Adrenal gland (tissue), 19 donors: ENCODE measurements at regions of chr12 and their contacts with region 1.

Region 1: GRCh38 chr12:69470189-69471075 is at the start of gene FRS2:
- DNase-seq: peak; percentile 90 to 95 (median 94)
- H3K4me3 ChIP-seq: peak within 1 kb of the TSS; percentile 67 to 96 (median 89)
- H3K27ac ChIP-seq: peak within 1 kb of the TSS; percentile 78 to 97 (median 92)
- H3K4me1 ChIP-seq: peaks cover 30 to 49% of the 10 kb centered on the region in 2 donors
- H3K27me3 ChIP-seq: no peaks in the 10 kb centered on the region
- CTCF ChIP-seq: peak in 5 of 6 experiments; percentile 34 to 54 (median 44)
- POLR2A ChIP-seq: peak; percentile 76 to 84
- total RNA-seq, gene FRS2: 36.2 to 86.1 (median 47.2) TPM

Region 2: GRCh38 chr12:69275471-69275891 is 195.0 kb before region 1 on chr12:
- intact Hi-C with region 1: no loop called
- DNase-seq: peak in 3 of 7 donors; percentile 15 to 32 (median 23)
- H3K4me3 ChIP-seq: no peak overlapping the region
- H3K27ac ChIP-seq: no peak overlapping the region
- H3K4me1 ChIP-seq: peaks cover 11 to 13% of the 10 kb centered on the region in 2 donors
- H3K27me3 ChIP-seq: no peaks in the 10 kb centered on the region
- CTCF ChIP-seq: no peak
- POLR2A ChIP-seq: no peak

Region 3: GRCh38 chr12:69415471-69416275 is 54.8 kb before region 1 on chr12:
- intact Hi-C with region 1: no loop called
- DNase-seq: peak; percentile 38 to 89 (median 63)
- H3K4me3 ChIP-seq: no peak overlapping the region
- H3K27ac ChIP-seq: peak overlapping the region in 1 of 5 donors; percentile 55
- H3K4me1 ChIP-seq: peaks cover 0 to 4% of the 10 kb centered on the region in 2 donors
- H3K27me3 ChIP-seq: no peaks in the 10 kb centered on the region
- CTCF ChIP-seq: peak; percentile 47 to 92 (median 84)
- POLR2A ChIP-seq: no peak

Region 4: GRCh38 chr12:69534389-69534822 is 64.0 kb after region 1 on chr12:
- intact Hi-C with region 1: loop called in 1 of 2 experiments (anchors 5 kb)
- DNase-seq: peak; percentile 31 to 82 (median 67)
- H3K4me3 ChIP-seq: no peak overlapping the region
- H3K27ac ChIP-seq: peak overlapping the region in 2 of 5 donors; percentile 66 to 73
- H3K4me1 ChIP-seq: peaks cover 7 to 12% of the 10 kb centered on the region in 2 donors
- H3K27me3 ChIP-seq: no peaks in the 10 kb centered on the region
- CTCF ChIP-seq: no peak
- POLR2A ChIP-seq: no peak

Region 5: DNA sequence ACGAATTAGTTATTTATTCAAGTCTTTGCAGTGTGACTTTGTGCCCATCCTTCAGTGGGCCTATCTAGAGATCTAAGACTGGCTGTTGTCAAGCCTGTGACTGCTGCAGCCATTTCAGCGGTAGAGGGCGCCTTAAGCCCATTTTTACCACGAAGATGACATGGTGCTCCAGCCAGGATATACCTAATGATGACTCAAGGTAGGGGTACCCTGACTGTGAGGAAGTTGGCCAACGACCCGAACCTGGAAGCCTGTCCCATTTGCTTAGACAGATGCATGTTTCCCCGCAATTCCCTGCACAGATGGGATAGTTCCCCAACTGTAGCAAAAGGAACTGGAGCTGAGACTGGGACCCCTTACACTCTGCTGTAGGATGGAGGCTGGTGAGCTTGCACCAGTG is 309.5 kb after region 1 on chr12:
- intact Hi-C with region 1: no loop called
- DNase-seq: peak in 4 of 7 donors; percentile 16 to 37 (median 28)
- H3K4me3 ChIP-seq: no peak overlapping the region
- H3K27ac ChIP-seq: no peak overlapping the region
- H3K4me1 ChIP-seq: no peaks in the 10 kb centered on the region
- H3K27me3 ChIP-seq: no peaks in the 10 kb centered on the region
- CTCF ChIP-seq: peak in 2 of 6 experiments; percentile 20 to 30
- POLR2A ChIP-seq: no peak

Region 6: DNA sequence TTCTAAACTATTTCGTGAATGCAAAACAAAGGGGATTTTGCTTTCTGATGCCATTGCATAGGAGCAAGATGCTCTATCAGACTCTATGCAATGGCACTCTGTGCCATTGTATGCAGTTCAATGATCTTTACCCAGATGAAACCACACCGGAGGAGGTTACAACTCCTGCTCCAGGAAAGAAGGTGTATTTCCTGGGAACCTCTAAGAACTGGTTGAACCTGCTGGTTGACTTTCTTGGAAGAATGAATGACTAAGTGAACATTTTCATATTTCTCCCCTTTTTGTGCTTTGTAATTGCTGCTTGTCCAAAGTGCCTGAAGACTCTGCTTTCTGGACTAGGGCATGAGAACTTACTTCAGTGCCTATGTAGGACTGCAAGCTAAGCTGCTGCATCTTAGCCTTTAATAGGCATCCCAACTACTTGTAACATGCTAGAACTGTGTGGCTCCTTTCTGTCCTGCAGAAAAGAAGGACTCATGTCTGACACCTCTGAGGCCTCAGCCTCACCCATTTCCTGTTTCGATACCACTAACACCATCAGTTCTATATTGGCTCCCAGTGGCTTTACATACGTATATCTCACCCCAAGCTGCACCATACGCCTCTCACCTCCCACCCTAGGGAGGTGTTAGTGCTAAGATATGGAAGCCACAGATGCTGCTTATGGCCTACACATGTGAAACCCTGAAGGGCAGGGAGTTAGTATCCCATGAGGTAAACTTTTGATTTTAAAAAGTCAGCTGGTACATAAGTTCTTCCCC is 579.3 kb after region 1 on chr12:
- intact Hi-C with region 1: no loop called
- DNase-seq: no peak
- H3K4me3 ChIP-seq: no peak overlapping the region
- H3K27ac ChIP-seq: no peak overlapping the region
- H3K4me1 ChIP-seq: peaks cover 5 to 15% of the 10 kb centered on the region in 2 donors
- H3K27me3 ChIP-seq: no peaks in the 10 kb centered on the region
- CTCF ChIP-seq: no peak
- POLR2A ChIP-seq: no peak